ENCODE measurements at regions of chr11 and their contacts with region 1.

Region 1: DNA sequence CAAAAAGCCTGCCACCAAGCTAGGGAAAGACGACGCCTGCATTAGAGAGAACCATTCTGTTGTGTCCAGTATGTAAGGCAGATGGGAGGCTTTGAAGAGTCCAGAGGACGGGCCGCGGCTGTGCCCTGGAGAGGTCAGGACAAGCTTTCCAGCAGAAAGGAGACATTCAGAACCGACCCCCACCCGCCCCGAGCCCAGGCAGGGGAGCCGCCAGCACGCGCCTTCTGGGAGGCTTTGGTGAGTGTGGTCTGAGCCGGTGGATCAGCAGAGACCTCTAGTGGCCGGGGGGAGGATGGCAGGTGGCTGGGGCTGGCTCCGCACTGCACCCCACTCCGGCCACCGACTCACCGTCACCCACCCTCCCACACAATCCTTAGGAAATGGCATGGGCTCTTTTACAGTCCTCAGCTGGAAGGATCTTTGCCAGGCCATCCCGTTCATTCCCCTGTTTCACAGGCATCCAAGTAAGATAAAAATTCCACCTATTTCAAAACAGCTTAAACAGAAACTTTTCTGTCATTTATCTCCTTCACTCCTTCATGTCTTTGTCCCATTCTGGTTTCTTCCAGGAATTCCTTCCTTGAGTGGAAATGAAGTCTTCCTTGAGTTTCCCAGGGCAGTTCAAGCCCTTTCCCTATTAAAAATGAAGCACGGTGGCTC is 91.2 kb downstream of the FEZ1 start:
- DNase-seq: peak; percentile 75
- H3K4me3 Mint-ChIP-seq: no peak overlapping the region
- H3K27ac Mint-ChIP-seq: no peak overlapping the region
- H3K4me1 Mint-ChIP-seq: no peaks in the 10 kb centered on the region
- H3K27me3 Mint-ChIP-seq: peaks cover 100% of the 10 kb centered on the region
- CTCF ChIP-seq: peak; percentile 74

Region 2: DNA sequence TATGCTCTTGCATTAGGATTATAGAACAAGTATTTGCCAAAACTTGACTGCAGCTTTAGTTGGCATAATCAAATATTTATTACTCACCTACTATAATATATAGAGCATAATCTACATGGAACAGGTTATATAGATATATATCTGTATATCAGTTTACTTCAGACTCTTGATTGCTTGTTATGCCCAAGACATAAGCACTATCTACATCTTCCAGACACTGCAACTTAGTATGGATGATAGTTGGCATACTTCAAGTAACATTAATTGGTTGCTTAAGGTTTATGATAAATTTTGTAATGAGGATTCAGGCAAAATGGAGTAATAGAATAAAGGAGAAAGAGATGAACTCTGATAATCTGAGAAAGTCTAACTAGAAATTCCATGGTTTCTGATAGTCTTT is 449.9 kb before region 1 on chr11:
- CTCF ChIA-PET with region 1: no interaction called
- intact Hi-C with region 1: loop called (anchors 5 kb)
- DNase-seq: no peak
- H3K4me3 Mint-ChIP-seq: no peak overlapping the region
- H3K27ac Mint-ChIP-seq: no peak overlapping the region
- H3K4me1 Mint-ChIP-seq: no peaks in the 10 kb centered on the region
- H3K27me3 Mint-ChIP-seq: no peaks in the 10 kb centered on the region
- CTCF ChIP-seq: no peak

Region 3: GRCh38 chr11:125062931-125063428 is 341.9 kb before region 1 on chr11 and contains the start of gene SLC37A2:
- CTCF ChIA-PET with region 1: no interaction called
- intact Hi-C with region 1: no loop called
- DNase-seq: peak; percentile 68
- H3K4me3 Mint-ChIP-seq: peak within 1 kb of the TSS; percentile 75
- H3K27ac Mint-ChIP-seq: peak within 1 kb of the TSS; percentile 47
- H3K4me1 Mint-ChIP-seq: peaks cover 7% of the 10 kb centered on the region
- H3K27me3 Mint-ChIP-seq: no peaks in the 10 kb centered on the region
- CTCF ChIP-seq: no peak
- total RNA-seq, gene SLC37A2: 2.5 and 4.3 TPM in 2 replicates

Region 4: DNA sequence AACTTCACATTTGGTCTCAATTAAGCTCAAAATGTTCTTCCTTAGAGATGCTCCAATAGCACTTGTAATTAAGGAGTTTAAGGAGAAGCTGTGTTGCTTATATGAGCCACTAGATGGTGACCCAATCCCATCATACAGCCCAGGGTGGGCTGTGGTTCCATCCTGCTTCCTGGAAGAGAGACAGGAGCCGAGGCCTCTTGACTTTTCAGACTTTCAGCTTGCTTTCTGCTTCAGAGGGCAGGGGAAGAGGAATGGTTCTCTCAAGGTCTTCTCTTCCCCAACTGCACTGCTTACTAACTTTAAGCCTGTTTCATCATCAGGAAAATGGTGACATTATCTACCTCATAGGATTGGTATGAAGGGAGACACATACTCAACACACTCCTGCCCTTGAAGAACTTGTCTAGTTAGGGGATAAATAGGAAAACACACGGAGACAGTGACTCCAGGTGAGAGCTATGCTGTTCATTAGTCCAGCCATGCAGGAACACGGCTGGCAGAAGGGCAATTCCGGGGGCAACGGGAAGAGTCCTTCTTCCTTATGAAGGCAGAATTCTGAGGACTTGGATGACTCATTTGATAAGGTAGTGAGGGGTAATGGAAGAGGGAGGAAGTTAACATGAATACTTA is 313.5 kb before region 1 on chr11:
- CTCF ChIA-PET with region 1: no interaction called
- intact Hi-C with region 1: loop called (anchors 10 kb)
- DNase-seq: no peak
- H3K4me3 Mint-ChIP-seq: no peak overlapping the region
- H3K27ac Mint-ChIP-seq: peak overlapping the region; percentile 71
- H3K4me1 Mint-ChIP-seq: peaks cover 9% of the 10 kb centered on the region
- H3K27me3 Mint-ChIP-seq: no peaks in the 10 kb centered on the region
- CTCF ChIP-seq: no peak

Region 5: DNA sequence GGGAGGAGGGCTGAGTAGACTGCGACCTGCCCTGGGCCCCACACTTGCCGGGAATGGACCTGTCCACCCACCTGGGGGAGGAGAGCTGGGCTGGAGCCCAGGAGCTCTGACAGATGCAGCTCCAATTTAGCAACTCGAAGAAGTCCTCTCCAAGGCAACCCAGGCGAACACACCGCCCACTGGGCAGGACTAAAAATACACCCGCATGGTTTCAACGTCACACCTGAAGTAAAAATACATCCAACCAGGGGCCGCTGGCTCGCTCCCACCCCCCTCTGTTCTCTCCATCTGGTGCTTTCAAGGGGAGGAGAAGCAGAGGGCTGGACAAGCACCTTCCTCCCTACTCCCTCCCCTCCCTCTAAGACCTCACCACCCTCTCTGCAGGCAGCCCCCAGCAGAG is 28.8 kb before region 1 on chr11:
- CTCF ChIA-PET with region 1: no interaction called
- intact Hi-C with region 1: no loop called
- DNase-seq: no peak
- H3K4me3 Mint-ChIP-seq: no peak overlapping the region
- H3K27ac Mint-ChIP-seq: no peak overlapping the region
- H3K4me1 Mint-ChIP-seq: no peaks in the 10 kb centered on the region
- H3K27me3 Mint-ChIP-seq: peaks cover 100% of the 10 kb centered on the region
- CTCF ChIP-seq: no peak

Region 6: GRCh38 chr11:125621987-125622386 is 217.1 kb after region 1 on chr11:
- CTCF ChIA-PET with region 1: no interaction called
- intact Hi-C with region 1: no loop called
- DNase-seq: no peak
- H3K4me3 Mint-ChIP-seq: no peak overlapping the region
- H3K27ac Mint-ChIP-seq: no peak overlapping the region
- H3K4me1 Mint-ChIP-seq: peaks cover 9% of the 10 kb centered on the region
- H3K27me3 Mint-ChIP-seq: no peaks in the 10 kb centered on the region
- CTCF ChIP-seq: no peak

Measured in Calu3 (cell line).